Activated naive CD4-positive, alpha-beta T cell treated with anti-CD3 and anti-CD28 coated beads for 36 hours (primary cell): ENCODE measurements at regions of chr3 and their contacts with region 1.

Region 1: GRCh38 chr3:72426618-72427397 is 421.4 kb downstream of the SHQ1 start:
- DNase-seq: no peak
- H3K4me3 Mint-ChIP-seq: no peak overlapping the region
- H3K27ac Mint-ChIP-seq: no peak overlapping the region
- H3K4me1 Mint-ChIP-seq: peaks cover 70% of the 10 kb centered on the region
- H3K27me3 Mint-ChIP-seq: no peaks in the 10 kb centered on the region

Region 2: DNA sequence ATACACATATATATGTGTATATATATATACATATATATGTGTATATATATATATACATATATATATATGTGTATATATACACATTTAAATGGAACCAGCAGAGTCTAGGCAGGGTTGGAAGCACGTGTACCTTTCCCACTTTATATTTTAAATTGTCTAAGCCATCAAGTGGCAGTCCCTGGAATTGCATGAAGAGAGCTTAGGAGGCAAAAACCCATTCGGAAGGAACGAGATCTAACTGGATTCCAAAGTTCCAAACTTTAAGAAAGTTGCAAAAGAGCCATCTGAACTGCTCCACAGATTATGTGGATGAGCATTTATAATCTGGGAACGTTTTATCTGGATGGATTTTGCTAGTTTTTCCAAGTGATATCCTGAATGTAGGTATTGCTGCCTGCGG is 1029.8 kb before region 1 on chr3:
- CTCF ChIA-PET with region 1: no interaction called
- intact Hi-C with region 1: no loop called
- DNase-seq: peak; percentile 35
- H3K4me3 Mint-ChIP-seq: peak overlapping the region; percentile 5
- H3K27ac Mint-ChIP-seq: no peak overlapping the region
- H3K4me1 Mint-ChIP-seq: peaks cover 81% of the 10 kb centered on the region
- H3K27me3 Mint-ChIP-seq: no peaks in the 10 kb centered on the region

Region 3: GRCh38 chr3:72339116-72340030 is 87.4 kb before region 1 on chr3:
- CTCF ChIA-PET with region 1: no interaction called
- intact Hi-C with region 1: loop called (anchors 2 kb)
- DNase-seq: no peak
- H3K4me3 Mint-ChIP-seq: no peak overlapping the region
- H3K27ac Mint-ChIP-seq: no peak overlapping the region
- H3K4me1 Mint-ChIP-seq: peaks cover 36% of the 10 kb centered on the region
- H3K27me3 Mint-ChIP-seq: no peaks in the 10 kb centered on the region

Region 4: GRCh38 chr3:72407766-72408165 is 19.0 kb before region 1 on chr3:
- CTCF ChIA-PET with region 1: no interaction called
- intact Hi-C with region 1: loop called (anchors 1 kb)
- DNase-seq: no peak
- H3K4me3 Mint-ChIP-seq: no peak overlapping the region
- H3K27ac Mint-ChIP-seq: no peak overlapping the region
- H3K4me1 Mint-ChIP-seq: peaks cover 85% of the 10 kb centered on the region
- H3K27me3 Mint-ChIP-seq: no peaks in the 10 kb centered on the region

Region 5: GRCh38 chr3:72447059-72447946 is 20.5 kb after region 1 on chr3:
- CTCF ChIA-PET with region 1: no interaction called
- intact Hi-C with region 1: loop called (anchors 2 kb)
- DNase-seq: peak; percentile 88
- H3K4me3 Mint-ChIP-seq: peak overlapping the region; percentile 54
- H3K27ac Mint-ChIP-seq: no peak overlapping the region
- H3K4me1 Mint-ChIP-seq: peaks cover 37% of the 10 kb centered on the region
- H3K27me3 Mint-ChIP-seq: peaks cover 12% of the 10 kb centered on the region

Region 6: GRCh38 chr3:72722930-72723726 is 296.3 kb after region 1 on chr3:
- CTCF ChIA-PET with region 1: no interaction called
- intact Hi-C with region 1: loop called (anchors 5 kb)
- DNase-seq: peak; percentile 27
- H3K4me3 Mint-ChIP-seq: no peak overlapping the region
- H3K27ac Mint-ChIP-seq: no peak overlapping the region
- H3K4me1 Mint-ChIP-seq: peaks cover 17% of the 10 kb centered on the region
- H3K27me3 Mint-ChIP-seq: no peaks in the 10 kb centered on the region

Region 7: GRCh38 chr3:73037369-73037699 is 610.5 kb after region 1 on chr3:
- CTCF ChIA-PET with region 1: no interaction called
- intact Hi-C with region 1: loop called (anchors 10 kb)
- DNase-seq: no peak
- H3K4me3 Mint-ChIP-seq: no peak overlapping the region
- H3K27ac Mint-ChIP-seq: peak overlapping the region; percentile 16
- H3K4me1 Mint-ChIP-seq: peaks cover 89% of the 10 kb centered on the region
- H3K27me3 Mint-ChIP-seq: no peaks in the 10 kb centered on the region

Region 8: GRCh38 chr3:73094125-73094524 is 667.3 kb after region 1 on chr3:
- CTCF ChIA-PET with region 1: no interaction called
- intact Hi-C with region 1: no loop called
- DNase-seq: no peak
- H3K4me3 Mint-ChIP-seq: no peak overlapping the region
- H3K27ac Mint-ChIP-seq: peak overlapping the region; percentile 27
- H3K4me1 Mint-ChIP-seq: peaks cover 5% of the 10 kb centered on the region
- H3K27me3 Mint-ChIP-seq: no peaks in the 10 kb centered on the region